ENCODE measurements at regions of chr17 and their contacts with region 1.

Region 1: GRCh38 chr17:47840740-47841603 is at the start of gene SCRN2:
- DNase-seq: peak; percentile 87
- ATAC-seq: peak; percentile 86
- H3K4me3 ChIP-seq: peak within 1 kb of the TSS; percentile 80 to 95 (median 84)
- H3K27ac ChIP-seq: peak within 1 kb of the TSS; percentile 66
- H3K4me1 ChIP-seq: peaks cover 72% of the 10 kb centered on the region
- H3K27me3 ChIP-seq: no peaks in the 10 kb centered on the region; a peak in 1 of 5 replicates
- CTCF ChIP-seq: peak; percentile 99
- EP300 ChIP-seq: 0 out of 4 replicates have a peak, but pooled peaks of 1 of the 2 experiments have one; percentile 15
- POLR2A ChIP-seq: peak; percentile 40 to 78; a peak in 3 of 4 replicates
- RAD21 ChIP-seq: peak; percentile 99
- total RNA-seq, gene SCRN2: 15.0 and 29.5 TPM in 2 replicates

Region 2: GRCh38 chr17:47889734-47890529 is 49.0 kb after region 1 on chr17:
- CTCF ChIA-PET with region 1: interaction called, 162 read pairs
- POLR2A ChIA-PET with region 1: interaction called, 56 read pairs
- in situ Hi-C with region 1: loop called (anchors 5 kb)
- intact Hi-C with region 1: loop called (anchors 1 kb)
- DNase-seq: peak; percentile 81
- ATAC-seq: peak; percentile 93
- H3K4me3 ChIP-seq: no peak overlapping the region
- H3K27ac ChIP-seq: no peak overlapping the region
- H3K4me1 ChIP-seq: peaks cover 28% of the 10 kb centered on the region
- H3K27me3 ChIP-seq: peaks cover 1 to 10% of the 10 kb centered on the region in 2 experiments; a peak in 4 of 5 replicates
- CTCF ChIP-seq: peak; percentile 99
- EP300 ChIP-seq: no peak
- POLR2A ChIP-seq: no peak
- RAD21 ChIP-seq: peak; percentile 98

Region 3: GRCh38 chr17:47949136-47949759 is 108.3 kb after region 1 on chr17:
- CTCF ChIA-PET with region 1: no interaction called
- POLR2A ChIA-PET with region 1: interaction called, 5 read pairs
- in situ Hi-C with region 1: no loop called
- intact Hi-C with region 1: loop called (anchors 2 kb)
- DNase-seq: peak; percentile 80
- ATAC-seq: peak; percentile 78
- H3K4me3 ChIP-seq: peak overlapping the region; percentile 18 to 43 (median 28); a peak in 5 of 6 replicates
- H3K27ac ChIP-seq: peak overlapping the region; percentile 76
- H3K4me1 ChIP-seq: peaks cover 91% of the 10 kb centered on the region
- H3K27me3 ChIP-seq: no peaks in the 10 kb centered on the region
- CTCF ChIP-seq: peak; percentile 98
- EP300 ChIP-seq: peak in 1 of 2 experiments; percentile 37; a peak in 1 of 4 replicates
- POLR2A ChIP-seq: no peak; a peak in 1 of 4 replicates
- RAD21 ChIP-seq: peak; percentile 97

Region 4: GRCh38 chr17:47970704-47971463 is 129.9 kb after region 1 on chr17 and contains the start of gene CDK5RAP3:
- CTCF ChIA-PET with region 1: interaction called, 10 read pairs
- POLR2A ChIA-PET with region 1: interaction called, 5 read pairs
- in situ Hi-C with region 1: no loop called
- intact Hi-C with region 1: loop called (anchors 1 kb)
- DNase-seq: peak; percentile 99
- ATAC-seq: peak; percentile 97
- H3K4me3 ChIP-seq: peak within 1 kb of the TSS; percentile 66 to 95 (median 92)
- H3K27ac ChIP-seq: peak within 1 kb of the TSS; percentile 63
- H3K4me1 ChIP-seq: peaks cover 51% of the 10 kb centered on the region
- H3K27me3 ChIP-seq: no peaks in the 10 kb centered on the region; a peak in 1 of 5 replicates
- CTCF ChIP-seq: peak; percentile 100
- EP300 ChIP-seq: 0 out of 4 replicates have a peak, but pooled peaks of 1 of the 2 experiments have one; percentile 62
- POLR2A ChIP-seq: peak; percentile 92 to 95
- RAD21 ChIP-seq: peak; percentile 99
- total RNA-seq, gene CDK5RAP3: 86.8 and 128 TPM in 2 replicates

Region 5: GRCh38 chr17:48016112-48016511 is 175.1 kb after region 1 on chr17:
- CTCF ChIA-PET with region 1: interaction called, 5 read pairs
- POLR2A ChIA-PET with region 1: interaction called, 5 read pairs
- in situ Hi-C with region 1: loop called (anchors 5 kb)
- intact Hi-C with region 1: loop called (anchors 1 kb)
- DNase-seq: no peak
- ATAC-seq: no peak
- H3K4me3 ChIP-seq: no peak overlapping the region
- H3K27ac ChIP-seq: no peak overlapping the region
- H3K4me1 ChIP-seq: peaks cover 11% of the 10 kb centered on the region
- H3K27me3 ChIP-seq: peaks cover 10 to 49% of the 10 kb centered on the region in 2 experiments; a peak in 4 of 5 replicates
- CTCF ChIP-seq: no peak
- EP300 ChIP-seq: no peak
- POLR2A ChIP-seq: no peak
- RAD21 ChIP-seq: no peak